ENCODE measurements at regions of chr1 and their contacts with region 1.

Region 1: GRCh38 chr1:193104906-193105820 is at the start of gene GLRX2:
- DNase-seq: peak; percentile 89
- H3K4me3 ChIP-seq: peak within 1 kb of the TSS; percentile 74
- H3K27ac ChIP-seq: peak within 1 kb of the TSS; percentile 75
- H3K4me1 ChIP-seq: peaks cover 11% of the 10 kb centered on the region
- H3K27me3 ChIP-seq: no peaks in the 10 kb centered on the region
- CTCF ChIP-seq: no peak
- total RNA-seq, gene GLRX2: 31.9 and 35.7 TPM in 2 replicates

Region 2: GRCh38 chr1:193094112-193094511 is 11.1 kb before region 1 on chr1:
- CTCF ChIA-PET with region 1: no interaction called
- POLR2A ChIA-PET with region 1: interaction called, 11 read pairs
- intact Hi-C with region 1: no loop called
- DNase-seq: no peak
- H3K4me3 ChIP-seq: no peak overlapping the region
- H3K27ac ChIP-seq: no peak overlapping the region
- H3K4me1 ChIP-seq: no peaks in the 10 kb centered on the region
- H3K27me3 ChIP-seq: no peaks in the 10 kb centered on the region
- CTCF ChIP-seq: no peak

Region 3: GRCh38 chr1:193121616-193122593 is 16.7 kb after region 1 on chr1 and contains the start of gene CDC73:
- CTCF ChIA-PET with region 1: no interaction called
- POLR2A ChIA-PET with region 1: no interaction called
- intact Hi-C with region 1: loop called (anchors 1 kb)
- DNase-seq: peak; percentile 98
- H3K4me3 ChIP-seq: peak within 1 kb of the TSS; percentile 86
- H3K27ac ChIP-seq: peak within 1 kb of the TSS; percentile 95
- H3K4me1 ChIP-seq: peaks cover 9% of the 10 kb centered on the region
- H3K27me3 ChIP-seq: no peaks in the 10 kb centered on the region
- CTCF ChIP-seq: peak; percentile 99
- total RNA-seq, gene CDC73: 61.5 and 71.0 TPM in 2 replicates

Region 4: GRCh38 chr1:193326296-193326695 is 221.1 kb after region 1 on chr1:
- CTCF ChIA-PET with region 1: no interaction called
- POLR2A ChIA-PET with region 1: no interaction called
- intact Hi-C with region 1: no loop called
- DNase-seq: no peak
- H3K4me3 ChIP-seq: no peak overlapping the region
- H3K27ac ChIP-seq: no peak overlapping the region
- H3K4me1 ChIP-seq: no peaks in the 10 kb centered on the region
- H3K27me3 ChIP-seq: no peaks in the 10 kb centered on the region
- CTCF ChIP-seq: no peak